Psoas muscle (tissue), 8 donors: ENCODE measurements at regions of chr10 and their contacts with region 1.

Region 1: DNA sequence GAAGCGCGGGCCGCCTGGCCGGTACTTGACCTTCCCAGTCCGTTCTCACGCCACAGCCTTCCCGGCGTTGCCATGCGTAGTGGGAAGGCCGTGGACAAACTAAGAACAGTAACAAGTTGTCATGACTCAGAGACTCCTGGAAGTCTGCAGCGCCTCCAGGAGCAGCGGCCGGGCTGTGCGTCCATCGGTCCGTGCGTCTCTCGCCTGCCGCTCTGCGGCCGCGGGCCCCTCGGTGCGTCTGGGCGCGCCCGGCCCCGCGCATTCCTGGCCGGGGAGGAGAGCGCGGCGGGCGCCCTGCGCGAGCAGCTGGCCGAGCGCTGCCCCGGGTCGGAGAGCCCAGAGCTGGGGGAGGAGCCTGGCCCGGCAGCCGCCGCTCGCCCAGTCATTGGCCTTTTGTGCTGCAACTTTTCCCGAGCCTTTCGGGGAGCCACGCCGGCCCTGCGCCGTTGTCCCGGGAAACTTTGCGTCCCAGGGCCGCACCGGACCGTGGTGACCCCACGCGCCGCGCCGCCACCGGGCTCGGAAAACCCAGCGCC is 123.7 kb downstream of the TACC2 start:
- DNase-seq: peak; percentile 90 to 95
- ATAC-seq: peak; percentile 83 to 90 (median 85)
- H3K4me3 ChIP-seq: peak overlapping the region; percentile 79
- H3K27ac ChIP-seq: peak overlapping the region; percentile 97
- H3K4me1 ChIP-seq: peaks cover 63% of the 10 kb centered on the region
- H3K27me3 ChIP-seq: no peaks in the 10 kb centered on the region
- CTCF ChIP-seq: peak; percentile 45

Region 2: DNA sequence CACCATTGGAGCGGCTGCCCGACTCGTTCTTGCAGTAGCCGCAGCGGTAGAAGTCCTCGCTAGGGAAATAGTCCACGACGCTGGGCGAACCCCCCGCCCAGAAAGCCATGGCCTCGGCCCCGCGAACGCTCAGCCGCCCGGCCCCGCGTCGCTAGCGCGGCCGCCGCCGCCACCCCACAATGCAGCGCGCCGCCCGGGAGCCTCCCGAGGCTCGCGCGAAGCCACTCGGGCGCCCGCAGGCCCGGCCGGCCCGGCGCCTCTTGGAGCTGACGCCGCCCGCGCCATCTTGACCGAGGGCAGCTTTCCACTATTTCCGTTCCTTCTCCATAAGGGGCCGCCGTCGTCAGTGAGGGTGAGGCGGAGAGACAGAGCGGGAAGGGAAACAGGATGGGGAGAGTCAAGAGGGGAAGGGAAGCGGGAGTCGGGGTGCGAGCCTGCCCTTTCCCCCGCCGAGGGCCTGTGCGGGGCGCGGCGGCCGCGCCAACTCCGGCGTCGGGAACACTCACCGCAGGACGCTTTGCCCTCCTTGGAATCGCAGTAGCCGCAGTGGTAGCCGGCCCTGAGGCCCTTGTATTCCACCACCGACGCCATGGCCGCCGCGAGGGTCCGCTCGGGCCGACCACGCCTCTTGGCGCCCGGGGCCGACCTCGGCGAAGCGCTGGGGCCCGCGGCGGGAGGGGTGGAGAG is 184.7 kb before region 1 on chr10 and contains the start of gene ATE1:
- intact Hi-C with region 1: loop called in 1 of 2 experiments (anchors 2 kb)
- DNase-seq: peak; percentile 91 to 94
- ATAC-seq: peak; percentile 94 to 97 (median 96)
- H3K4me3 ChIP-seq: peak within 1 kb of the TSS; percentile 85
- H3K27ac ChIP-seq: peak within 1 kb of the TSS; percentile 99
- H3K4me1 ChIP-seq: peaks cover 19% of the 10 kb centered on the region
- H3K27me3 ChIP-seq: no peaks in the 10 kb centered on the region
- CTCF ChIP-seq: peak; percentile 8
- total RNA-seq, gene ATE1: 28.4 to 36.9 (median 31.4) TPM

Region 3: DNA sequence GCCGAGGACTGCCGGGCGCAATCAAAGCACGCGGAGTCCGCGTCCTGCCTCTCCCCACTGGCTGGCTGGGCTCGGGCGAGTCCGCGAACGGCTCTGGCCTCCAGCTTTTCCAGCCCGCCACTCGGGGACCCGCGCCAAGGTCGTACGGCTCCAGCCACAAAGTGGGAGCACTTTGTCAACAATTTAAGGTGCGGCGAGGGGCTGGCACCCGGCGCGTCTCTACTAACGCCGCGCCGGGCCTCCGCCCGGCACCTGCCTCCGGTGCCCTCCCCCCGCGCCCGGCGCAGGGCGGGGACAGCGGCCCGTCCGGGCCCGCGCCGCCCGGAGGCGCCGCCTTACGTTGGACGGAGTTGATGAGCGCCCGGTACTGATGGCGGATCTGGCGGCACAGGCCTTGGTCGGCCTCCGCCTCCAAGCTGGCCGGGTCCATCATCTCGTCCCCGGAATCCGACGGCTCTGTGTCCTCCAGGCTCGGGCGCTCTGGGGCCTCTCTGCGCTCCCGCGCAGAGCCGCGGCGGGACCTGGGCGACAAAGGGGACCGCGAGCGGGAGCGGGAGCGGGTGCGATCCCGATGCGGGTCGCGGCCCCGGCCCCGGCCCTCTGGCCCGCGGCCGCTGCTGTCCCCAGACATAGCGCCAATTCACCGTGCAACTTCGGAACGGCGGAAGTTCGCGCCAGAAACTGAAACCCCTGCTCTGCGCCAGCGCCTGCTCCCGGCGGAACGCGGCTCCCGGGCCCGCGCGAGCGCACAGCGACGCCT is 138.0 kb before region 1 on chr10 and contains the start of gene NSMCE4A:
- intact Hi-C with region 1: loop called in 1 of 2 experiments (anchors 10 kb)
- DNase-seq: peak; percentile 84 to 93
- ATAC-seq: peak; percentile 89 to 94 (median 90)
- H3K4me3 ChIP-seq: peak within 1 kb of the TSS; percentile 75
- H3K27ac ChIP-seq: peak within 1 kb of the TSS; percentile 89
- H3K4me1 ChIP-seq: peaks cover 14% of the 10 kb centered on the region
- H3K27me3 ChIP-seq: no peaks in the 10 kb centered on the region
- CTCF ChIP-seq: no peak
- total RNA-seq, gene NSMCE4A: 10.7 to 17.7 (median 14.6) TPM

Region 4: GRCh38 chr10:122051251-122051996 is 61.3 kb before region 1 on chr10:
- intact Hi-C with region 1: loop called (anchors 2 to 5 kb)
- DNase-seq: peak; percentile 38 to 63
- ATAC-seq: peak; percentile 47 to 63 (median 53)
- H3K4me3 ChIP-seq: no peak overlapping the region
- H3K27ac ChIP-seq: peak overlapping the region; percentile 94
- H3K4me1 ChIP-seq: peaks cover 61% of the 10 kb centered on the region
- H3K27me3 ChIP-seq: no peaks in the 10 kb centered on the region
- CTCF ChIP-seq: peak; percentile 74

Region 5: GRCh38 chr10:122098924-122099323 is 13.8 kb before region 1 on chr10:
- intact Hi-C with region 1: loop called in 1 of 2 experiments (anchors 2 kb)
- DNase-seq: peak in 1 of 2 donors; percentile 79
- ATAC-seq: peak; percentile 77 to 86 (median 82)
- H3K4me3 ChIP-seq: no peak overlapping the region
- H3K27ac ChIP-seq: peak overlapping the region; percentile 47
- H3K4me1 ChIP-seq: peaks cover 28% of the 10 kb centered on the region
- H3K27me3 ChIP-seq: no peaks in the 10 kb centered on the region
- CTCF ChIP-seq: no peak